WTC11 (cell line): ENCODE measurements at regions of chr22 and their contacts with region 1.

Region 1: GRCh38 chr22:42868751-42869251 is 11.7 kb upstream of the ARFGAP3 start:
- DNase-seq: no peak
- ATAC-seq: no peak
- H3K4me3 Mint-ChIP-seq: no peak overlapping the region
- H3K27ac Mint-ChIP-seq: no peak overlapping the region
- H3K4me1 Mint-ChIP-seq: peaks cover 4% of the 10 kb centered on the region; the same call in 1 of the 2 replicates
- H3K27me3 Mint-ChIP-seq: no peaks in the 10 kb centered on the region
- CTCF ChIP-seq: no peak

Region 2: GRCh38 chr22:42621505-42622002 is 247.2 kb before region 1 on chr22:
- CTCF ChIA-PET with region 1: interaction called, 12 read pairs
- POLR2A ChIA-PET with region 1: no interaction called
- DNase-seq: peak; percentile 91
- ATAC-seq: peak; percentile 95
- H3K4me3 Mint-ChIP-seq: no peak overlapping the region
- H3K27ac Mint-ChIP-seq: no peak overlapping the region
- H3K4me1 Mint-ChIP-seq: peaks cover 7% of the 10 kb centered on the region
- H3K27me3 Mint-ChIP-seq: no peaks in the 10 kb centered on the region
- CTCF ChIP-seq: peak; percentile 80

Region 3: GRCh38 chr22:42720263-42721044 is 148.3 kb before region 1 on chr22 and contains the start of gene A4GALT:
- CTCF ChIA-PET with region 1: no interaction called
- POLR2A ChIA-PET with region 1: no interaction called
- DNase-seq: peak; percentile 45
- ATAC-seq: peak; percentile 46
- H3K4me3 Mint-ChIP-seq: peak within 1 kb of the TSS; percentile 70
- H3K27ac Mint-ChIP-seq: no peak within 1 kb of the TSS
- H3K4me1 Mint-ChIP-seq: peaks cover 37% of the 10 kb centered on the region
- H3K27me3 Mint-ChIP-seq: peaks cover 50% of the 10 kb centered on the region
- CTCF ChIP-seq: no peak
- total RNA-seq, gene A4GALT: 13.9 to 22.1 TPM (median 16.8 TPM) in 3 replicates

Region 4: DNA sequence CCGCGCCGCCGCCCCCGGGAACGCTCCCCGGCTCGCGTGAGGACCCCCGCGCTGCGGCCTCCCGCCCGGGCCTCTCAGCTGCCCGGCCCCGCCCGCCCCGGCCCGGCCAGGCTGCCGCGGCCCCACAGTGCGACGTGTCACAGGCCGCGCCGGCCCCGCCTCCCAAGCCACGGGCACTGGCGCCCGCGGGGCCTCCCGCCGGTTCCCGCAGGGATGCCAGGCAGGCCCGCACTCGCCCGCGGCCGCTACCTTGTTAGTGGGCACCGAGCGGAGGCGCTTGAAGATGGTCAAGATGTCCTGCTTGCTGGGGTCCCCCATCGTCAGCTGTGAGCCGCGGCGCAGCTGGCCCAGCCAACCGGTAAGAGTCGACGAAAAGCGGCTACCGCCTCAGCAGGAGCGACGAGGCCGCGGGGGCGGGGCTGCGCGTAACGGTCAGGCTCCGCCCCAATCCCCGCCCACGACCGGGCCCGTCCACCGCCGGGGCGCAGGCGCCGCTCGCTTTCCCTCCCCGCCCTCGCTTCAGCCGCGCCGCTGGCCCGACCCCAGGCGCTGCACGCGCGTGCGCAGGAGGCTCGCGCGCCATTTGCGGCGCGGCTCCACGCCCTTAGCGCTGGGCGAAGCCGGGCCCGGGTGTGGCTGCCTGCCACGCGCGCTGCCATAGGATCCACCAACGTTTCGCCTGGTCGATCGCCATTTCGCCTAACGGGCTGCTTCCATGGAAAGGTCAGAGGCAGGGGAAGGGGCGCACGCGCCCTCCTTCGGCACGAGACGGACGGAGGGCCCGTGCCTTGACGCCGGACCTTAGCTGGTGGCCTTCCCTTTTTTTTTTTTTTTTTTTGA is 11.7 kb before region 1 on chr22 and contains the start of gene ARFGAP3:
- CTCF ChIA-PET with region 1: interaction called, 43 read pairs
- POLR2A ChIA-PET with region 1: interaction called, 3 read pairs
- DNase-seq: peak; percentile 94
- ATAC-seq: peak; percentile 97
- H3K4me3 Mint-ChIP-seq: peak within 1 kb of the TSS; percentile 84
- H3K27ac Mint-ChIP-seq: no peak within 1 kb of the TSS
- H3K4me1 Mint-ChIP-seq: peaks cover 4% of the 10 kb centered on the region; the same call in 1 of the 2 replicates
- H3K27me3 Mint-ChIP-seq: peaks cover 44% of the 10 kb centered on the region
- CTCF ChIP-seq: no peak
- total RNA-seq, gene ARFGAP3: 16.9 to 17.1 TPM (median 17.1 TPM) in 3 replicates

Region 5: DNA sequence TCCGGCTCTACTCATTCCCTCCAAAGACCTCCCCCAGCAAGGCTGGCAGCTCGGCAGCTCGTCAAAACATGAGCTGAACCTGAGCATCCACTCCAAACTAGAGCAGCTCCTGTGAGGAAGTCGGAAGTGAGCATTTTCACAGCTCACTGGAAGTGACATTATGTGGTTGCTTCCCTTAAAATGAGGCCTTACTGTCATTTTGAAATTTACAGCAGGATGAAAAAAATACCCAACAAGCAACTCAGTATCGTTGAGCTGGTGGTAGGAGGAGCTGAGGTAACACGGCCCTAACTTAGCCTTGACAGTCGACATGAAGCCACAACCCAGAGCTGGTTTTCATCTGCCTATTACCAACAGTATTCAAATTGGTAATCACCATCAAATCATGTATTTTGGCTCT is 26.3 kb after region 1 on chr22:
- CTCF ChIA-PET with region 1: interaction called, 23 read pairs
- POLR2A ChIA-PET with region 1: no interaction called
- DNase-seq: no peak
- ATAC-seq: no peak
- H3K4me3 Mint-ChIP-seq: no peak overlapping the region
- H3K27ac Mint-ChIP-seq: peak overlapping the region; percentile 58
- H3K4me1 Mint-ChIP-seq: peaks cover 27% of the 10 kb centered on the region
- H3K27me3 Mint-ChIP-seq: no peaks in the 10 kb centered on the region
- CTCF ChIP-seq: no peak

Region 6: GRCh38 chr22:42915980-42916765 is 47.4 kb after region 1 on chr22:
- CTCF ChIA-PET with region 1: interaction called, 14 read pairs
- POLR2A ChIA-PET with region 1: no interaction called
- DNase-seq: peak; percentile 42
- ATAC-seq: peak; percentile 87
- H3K4me3 Mint-ChIP-seq: no peak overlapping the region
- H3K27ac Mint-ChIP-seq: peak overlapping the region; percentile 92
- H3K4me1 Mint-ChIP-seq: peaks cover 38% of the 10 kb centered on the region
- H3K27me3 Mint-ChIP-seq: no peaks in the 10 kb centered on the region
- CTCF ChIP-seq: no peak

Region 7: GRCh38 chr22:43060183-43060582 is 191.4 kb after region 1 on chr22:
- CTCF ChIA-PET with region 1: interaction called, 36 read pairs
- POLR2A ChIA-PET with region 1: no interaction called
- DNase-seq: peak; percentile 91
- ATAC-seq: peak; percentile 98
- H3K4me3 Mint-ChIP-seq: no peak overlapping the region
- H3K27ac Mint-ChIP-seq: peak overlapping the region; percentile 69; the same call in 1 of the 2 replicates
- H3K4me1 Mint-ChIP-seq: no peaks in the 10 kb centered on the region
- H3K27me3 Mint-ChIP-seq: no peaks in the 10 kb centered on the region
- CTCF ChIP-seq: peak; percentile 98